HEK293T (cell line): ENCODE measurements at regions of chr6 and their contacts with region 1.

Region 1: GRCh38 chr6:148177589-148178233 is 164.9 kb upstream of the SASH1 start:
- DNase-seq: peak; percentile 59

Region 2: DNA sequence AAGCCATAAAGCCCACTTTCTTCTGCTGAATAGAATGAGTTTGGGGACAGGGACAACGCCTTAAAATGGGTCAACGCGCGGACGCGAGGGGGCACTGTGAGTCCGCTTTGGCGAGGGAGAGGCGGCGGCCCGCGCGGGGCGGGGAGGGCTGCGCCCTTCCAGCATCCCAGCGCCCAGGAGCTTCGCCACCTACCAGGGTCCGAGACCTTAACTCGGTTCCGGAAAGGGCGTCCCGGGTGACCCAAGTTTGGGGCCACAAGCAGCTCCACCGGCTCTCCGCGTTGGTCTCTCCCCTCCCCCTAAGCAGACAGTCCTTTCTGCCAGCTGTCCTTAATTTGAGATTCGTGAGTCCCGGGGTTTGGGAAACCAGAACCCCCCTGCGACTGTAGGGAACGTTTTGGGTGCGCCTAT is 671.0 kb before region 1 on chr6:
- CTCF ChIA-PET with region 1: interaction called, 11 read pairs
- POLR2A ChIA-PET with region 1: no interaction called
- DNase-seq: peak; percentile 89

Region 3: GRCh38 chr6:148037496-148037895 is 140.2 kb before region 1 on chr6:
- CTCF ChIA-PET with region 1: no interaction called
- POLR2A ChIA-PET with region 1: no interaction called
- DNase-seq: no peak

Region 4: DNA sequence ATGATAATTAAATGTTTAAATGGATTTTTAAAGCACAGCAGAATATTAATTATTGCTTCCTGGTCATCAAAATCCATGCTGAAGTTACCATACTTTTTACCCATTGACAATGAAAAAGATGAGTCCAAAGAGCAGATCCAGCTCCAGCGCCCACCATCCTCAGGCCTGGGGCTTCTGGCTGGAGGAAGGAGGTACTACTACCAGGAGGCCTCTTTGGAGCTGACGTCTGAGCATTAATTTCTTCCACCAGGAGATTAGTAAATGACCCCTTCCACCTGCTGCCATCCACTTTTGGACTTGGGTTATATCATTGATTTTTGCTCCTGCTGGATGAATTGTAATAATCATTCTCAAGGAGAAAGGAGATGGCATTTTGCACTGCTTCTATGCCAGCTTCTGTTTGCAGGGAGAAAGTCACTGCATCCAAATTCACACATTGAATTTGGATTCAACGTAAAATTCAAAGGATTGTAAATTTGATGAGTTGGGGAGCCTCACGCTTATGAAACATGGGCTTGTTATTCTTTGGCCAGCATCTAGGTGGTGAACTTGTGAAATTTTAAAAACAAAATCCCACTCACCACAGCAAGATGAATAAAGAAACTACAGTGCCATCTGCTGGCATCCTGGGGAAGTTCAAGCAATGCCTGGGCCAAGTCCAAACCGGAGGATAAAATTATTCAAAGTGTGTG is 286.8 kb after region 1 on chr6:
- CTCF ChIA-PET with region 1: interaction called, 17 read pairs
- POLR2A ChIA-PET with region 1: no interaction called
- DNase-seq: peak; percentile 73

Region 5: DNA sequence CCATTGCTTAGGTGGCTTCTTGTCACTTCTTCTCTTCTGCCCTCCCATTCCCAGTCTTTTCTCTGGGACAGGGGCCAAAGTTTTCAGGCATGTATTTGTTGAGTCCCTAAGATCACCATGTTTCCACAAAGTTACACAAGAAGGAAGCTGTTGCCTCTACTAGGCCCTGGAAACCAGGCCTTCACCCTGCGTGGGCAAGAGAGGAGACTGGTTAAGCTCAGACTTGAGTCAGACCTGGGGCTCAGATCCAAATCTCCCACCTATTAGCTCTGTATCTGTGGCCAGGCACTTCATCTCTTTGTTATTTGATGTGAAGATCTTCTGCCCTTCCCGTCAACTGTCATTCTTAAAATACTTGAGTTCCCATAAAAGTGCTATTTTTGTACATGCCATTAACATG is 319.5 kb after region 1 on chr6:
- CTCF ChIA-PET with region 1: no interaction called
- POLR2A ChIA-PET with region 1: no interaction called
- DNase-seq: no peak